ENCODE measurements at regions of chr10 and their contacts with region 1.

Region 1: GRCh38 chr10:13348216-13349017 is at the start of gene SEPHS1:
- DNase-seq: peak; percentile 65
- ATAC-seq: peak; percentile 66
- H3K4me3 Mint-ChIP-seq: peak within 1 kb of the TSS; percentile 89
- H3K27ac Mint-ChIP-seq: peak within 1 kb of the TSS; percentile 88
- H3K4me1 Mint-ChIP-seq: peaks cover 59% of the 10 kb centered on the region
- H3K27me3 Mint-ChIP-seq: peaks cover 8% of the 10 kb centered on the region
- CTCF ChIP-seq: no peak
- total RNA-seq, gene SEPHS1: 36.7 and 38.0 TPM in 2 replicates

Region 2: DNA sequence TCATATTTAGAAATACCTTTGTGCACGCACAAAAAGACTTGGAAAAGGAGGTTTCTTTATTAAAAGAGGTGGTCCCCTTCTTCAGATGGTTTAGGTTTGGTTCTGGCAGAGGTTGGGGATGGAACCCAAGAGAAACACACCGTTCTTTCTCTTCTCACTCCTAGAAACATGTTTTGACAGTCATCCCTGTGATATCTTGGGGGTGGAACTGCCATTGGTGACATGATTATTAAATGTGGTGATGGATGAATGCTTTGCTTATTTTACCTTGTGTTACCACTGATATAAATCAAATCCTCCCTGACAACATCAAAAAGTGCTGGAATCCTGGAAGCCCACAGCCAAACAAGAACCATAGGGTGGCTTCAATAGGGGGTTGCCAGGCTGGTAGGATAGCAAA is 493.4 kb before region 1 on chr10:
- CTCF ChIA-PET with region 1: no interaction called
- POLR2A ChIA-PET with region 1: no interaction called
- intact Hi-C with region 1: no loop called
- DNase-seq: no peak
- ATAC-seq: no peak
- H3K4me3 Mint-ChIP-seq: no peak overlapping the region
- H3K27ac Mint-ChIP-seq: no peak overlapping the region
- H3K4me1 Mint-ChIP-seq: no peaks in the 10 kb centered on the region
- H3K27me3 Mint-ChIP-seq: peaks cover 20% of the 10 kb centered on the region
- CTCF ChIP-seq: no peak

Region 3: GRCh38 chr10:13160934-13161856 is 187.2 kb before region 1 on chr10 and contains the start of gene MCM10:
- CTCF ChIA-PET with region 1: interaction called, 16 read pairs
- POLR2A ChIA-PET with region 1: no interaction called
- intact Hi-C with region 1: loop called (anchors 1 kb)
- DNase-seq: peak; percentile 88
- ATAC-seq: peak; percentile 100
- H3K4me3 Mint-ChIP-seq: peak within 1 kb of the TSS; percentile 89
- H3K27ac Mint-ChIP-seq: peak within 1 kb of the TSS; percentile 43
- H3K4me1 Mint-ChIP-seq: peaks cover 14% of the 10 kb centered on the region
- H3K27me3 Mint-ChIP-seq: no peaks in the 10 kb centered on the region
- CTCF ChIP-seq: peak; percentile 77
- total RNA-seq, gene MCM10: 3.7 and 4.6 TPM in 2 replicates

Region 4: GRCh38 chr10:13206546-13207443 is 141.6 kb before region 1 on chr10:
- CTCF ChIA-PET with region 1: interaction called, 6 read pairs
- POLR2A ChIA-PET with region 1: interaction called, 4 read pairs
- intact Hi-C with region 1: loop called (anchors 1 kb)
- DNase-seq: no peak
- ATAC-seq: no peak
- H3K4me3 Mint-ChIP-seq: no peak overlapping the region
- H3K27ac Mint-ChIP-seq: no peak overlapping the region
- H3K4me1 Mint-ChIP-seq: no peaks in the 10 kb centered on the region
- H3K27me3 Mint-ChIP-seq: no peaks in the 10 kb centered on the region
- CTCF ChIP-seq: no peak

Region 5: GRCh38 chr10:13271552-13272163 is 76.8 kb before region 1 on chr10:
- CTCF ChIA-PET with region 1: interaction called, 14 read pairs
- POLR2A ChIA-PET with region 1: no interaction called
- intact Hi-C with region 1: loop called (anchors 1 kb)
- DNase-seq: peak; percentile 28
- ATAC-seq: peak; percentile 65
- H3K4me3 Mint-ChIP-seq: peak overlapping the region; percentile 42
- H3K27ac Mint-ChIP-seq: peak overlapping the region; percentile 27
- H3K4me1 Mint-ChIP-seq: no peaks in the 10 kb centered on the region
- H3K27me3 Mint-ChIP-seq: no peaks in the 10 kb centered on the region
- CTCF ChIP-seq: no peak